ENCODE measurements at regions of chr20 and their contacts with region 1.

Region 1: DNA sequence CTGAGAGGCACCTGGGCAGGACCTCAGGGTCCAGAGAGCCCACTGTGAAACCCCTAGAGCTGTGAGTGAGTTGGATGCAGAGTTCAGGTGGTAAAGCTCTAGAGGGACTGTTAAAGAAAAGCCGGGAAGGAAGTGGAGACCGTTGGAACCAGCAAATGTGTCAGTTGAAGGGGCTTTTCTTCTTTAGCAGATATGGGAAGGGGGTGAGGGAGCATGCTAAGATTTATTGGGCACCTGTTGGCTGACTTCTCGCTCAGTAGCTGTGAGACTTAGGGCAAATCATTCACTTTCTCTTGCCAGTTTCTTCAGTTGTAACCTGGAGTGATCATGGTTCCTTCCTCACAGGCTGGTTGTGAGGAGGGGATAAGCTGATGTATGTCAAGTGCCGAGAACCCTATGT is 287.7 kb downstream of the DHX35 start:
- DNase-seq: peak in 1 of 2 experiments; percentile 18
- H3K4me3 ChIP-seq: no peak overlapping the region
- H3K4me3 Mint-ChIP-seq: no peak overlapping the region
- H3K27ac Mint-ChIP-seq: no peak overlapping the region
- H3K4me1 ChIP-seq: no peaks in the 10 kb centered on the region
- H3K4me1 Mint-ChIP-seq: no peaks in the 10 kb centered on the region
- H3K27me3 ChIP-seq: no peaks in the 10 kb centered on the region; the same call in 1 of the 2 replicates
- H3K27me3 Mint-ChIP-seq: peaks cover 24% of the 10 kb centered on the region
- CTCF ChIP-seq: no peak

Region 2: GRCh38 chr20:39214828-39215227 is 35.0 kb before region 1 on chr20:
- CTCF ChIA-PET with region 1: no interaction called
- POLR2A ChIA-PET with region 1: no interaction called
- intact Hi-C with region 1: loop called (anchors 1 kb)
- DNase-seq: no peak
- H3K4me3 ChIP-seq: no peak overlapping the region
- H3K4me3 Mint-ChIP-seq: no peak overlapping the region
- H3K27ac Mint-ChIP-seq: no peak overlapping the region
- H3K4me1 ChIP-seq: no peaks in the 10 kb centered on the region
- H3K4me1 Mint-ChIP-seq: no peaks in the 10 kb centered on the region
- H3K27me3 ChIP-seq: peaks cover 3% of the 10 kb centered on the region
- H3K27me3 Mint-ChIP-seq: peaks cover 21% of the 10 kb centered on the region
- CTCF ChIP-seq: peak; percentile 15 to 23

Measured in Caco-2 (cell line).